B cell (primary cell): ENCODE measurements at regions of chr12 and their contacts with region 1.

Region 1: DNA sequence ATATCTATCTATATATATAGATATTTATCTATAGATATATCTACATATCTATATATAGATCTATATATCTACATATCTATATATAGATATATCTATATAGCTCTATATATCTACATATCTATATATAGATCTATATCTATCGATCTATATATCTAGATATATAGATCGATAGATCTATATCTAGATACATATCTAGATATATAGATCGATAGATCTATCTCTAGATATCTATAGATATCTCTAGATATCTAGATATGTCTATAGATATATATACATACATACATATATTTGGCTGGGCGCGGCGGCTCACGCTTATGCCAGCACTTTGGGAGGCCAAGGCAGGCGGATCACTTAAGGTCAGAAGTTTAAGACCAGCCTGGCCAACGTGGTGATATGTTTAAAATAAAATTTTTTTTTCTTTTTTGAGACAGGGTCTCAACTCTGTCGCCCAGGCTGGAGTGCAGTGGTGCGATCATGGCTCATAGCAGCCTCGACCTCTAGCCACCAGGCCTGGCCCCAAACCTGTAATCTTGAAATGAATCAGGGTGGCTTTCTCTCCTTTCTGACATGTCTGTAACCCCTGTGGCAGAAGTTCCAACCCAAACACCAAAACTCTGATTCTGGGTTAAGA is 18.1 kb downstream of the ARPC3 start:
- DNase-seq: no peak
- ATAC-seq: no peak
- H3K4me3 ChIP-seq: peak overlapping the region in 3 of 5 experiments; percentile 37 to 54 (median 51)
- H3K4me3 Mint-ChIP-seq: no peak overlapping the region
- H3K27ac ChIP-seq: peak overlapping the region; percentile 5 to 21
- H3K27ac Mint-ChIP-seq: no peak overlapping the region
- H3K4me1 ChIP-seq: peaks cover 0 to 5% of the 10 kb centered on the region in 2 donors
- H3K4me1 Mint-ChIP-seq: peaks cover 2% of the 10 kb centered on the region
- H3K27me3 ChIP-seq: no peaks in the 10 kb centered on the region
- H3K27me3 Mint-ChIP-seq: no peaks in the 10 kb centered on the region
- CTCF ChIP-seq: no peak

Region 2: DNA sequence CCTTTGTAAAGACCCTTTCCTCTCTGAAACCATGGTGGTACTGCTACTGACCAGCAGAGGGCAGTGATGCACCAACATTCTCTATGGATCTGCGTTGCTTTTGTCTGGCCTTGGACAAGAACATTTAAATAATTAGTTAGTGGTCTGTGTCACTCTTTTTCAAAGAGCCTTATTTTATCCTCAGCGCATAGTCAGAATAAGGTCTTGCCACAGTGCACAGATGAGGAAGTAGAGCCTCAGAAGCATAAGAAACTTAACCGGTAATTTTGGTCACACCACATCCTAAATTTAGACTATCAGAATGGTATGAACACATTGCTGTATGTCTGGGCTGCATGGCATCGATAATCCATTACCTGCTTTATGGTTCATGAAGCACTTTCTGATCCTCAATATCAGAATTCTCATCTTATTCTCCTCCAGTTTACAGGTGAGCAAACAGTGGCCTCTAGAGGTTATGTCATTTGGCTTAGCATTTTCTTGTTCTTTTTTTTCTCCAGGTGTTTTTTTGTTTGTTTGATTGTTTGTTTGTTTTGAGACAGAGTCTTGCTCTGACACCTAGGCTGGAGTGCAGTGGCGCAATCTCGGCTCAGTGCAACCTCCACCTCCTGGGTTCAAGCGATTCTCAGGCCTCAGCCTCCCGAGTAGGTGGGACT is 331.6 kb before region 1 on chr12:
- CTCF ChIA-PET with region 1: interaction called, 39 read pairs
- POLR2A ChIA-PET with region 1: no interaction called
- intact Hi-C with region 1: loop called (anchors 1 kb)
- DNase-seq: peak; percentile 91
- ATAC-seq: peak; percentile 98
- H3K4me3 ChIP-seq: peak overlapping the region in 2 of 5 experiments; percentile 15 to 21
- H3K4me3 Mint-ChIP-seq: peak overlapping the region; percentile 67
- H3K27ac ChIP-seq: peak overlapping the region; percentile 72 to 73
- H3K27ac Mint-ChIP-seq: peak overlapping the region; percentile 81
- H3K4me1 ChIP-seq: peaks cover 21 to 22% of the 10 kb centered on the region in 2 donors
- H3K4me1 Mint-ChIP-seq: peaks cover 24% of the 10 kb centered on the region
- H3K27me3 ChIP-seq: no peaks in the 10 kb centered on the region
- H3K27me3 Mint-ChIP-seq: no peaks in the 10 kb centered on the region
- CTCF ChIP-seq: peak; percentile 93

Region 3: GRCh38 chr12:110330544-110330943 is 101.5 kb before region 1 on chr12:
- CTCF ChIA-PET with region 1: interaction called, 13 read pairs
- POLR2A ChIA-PET with region 1: interaction called, 8 read pairs
- intact Hi-C with region 1: no loop called
- DNase-seq: no peak
- ATAC-seq: no peak
- H3K4me3 ChIP-seq: no peak overlapping the region
- H3K4me3 Mint-ChIP-seq: no peak overlapping the region
- H3K27ac ChIP-seq: no peak overlapping the region
- H3K27ac Mint-ChIP-seq: no peak overlapping the region
- H3K4me1 ChIP-seq: no peaks in the 10 kb centered on the region
- H3K4me1 Mint-ChIP-seq: no peaks in the 10 kb centered on the region
- H3K27me3 ChIP-seq: no peaks in the 10 kb centered on the region
- H3K27me3 Mint-ChIP-seq: no peaks in the 10 kb centered on the region
- CTCF ChIP-seq: no peak

Region 4: DNA sequence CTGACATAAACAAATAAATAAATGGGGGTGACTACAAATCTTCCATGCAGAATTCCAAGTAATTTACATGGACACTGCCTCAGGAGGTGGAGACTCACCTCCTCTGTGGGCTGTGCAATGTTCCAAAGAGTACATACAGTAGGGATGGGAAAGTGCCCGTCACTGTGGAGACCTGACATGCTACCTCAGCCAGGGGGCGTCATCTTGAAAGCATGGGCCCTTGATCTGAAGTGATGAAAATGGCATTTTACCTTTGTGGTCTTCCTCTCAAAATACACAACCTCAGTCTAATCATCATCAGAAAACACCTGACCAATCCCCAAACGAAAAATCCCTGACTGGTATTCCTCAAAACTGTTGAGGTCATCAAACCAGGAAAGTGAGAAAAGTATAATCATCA is 77.0 kb before region 1 on chr12:
- CTCF ChIA-PET with region 1: interaction called, 30 read pairs
- POLR2A ChIA-PET with region 1: interaction called, 4 read pairs
- intact Hi-C with region 1: loop called (anchors 1 kb)
- DNase-seq: peak; percentile 55
- ATAC-seq: peak; percentile 62
- H3K4me3 ChIP-seq: no peak overlapping the region
- H3K4me3 Mint-ChIP-seq: no peak overlapping the region
- H3K27ac ChIP-seq: no peak overlapping the region
- H3K27ac Mint-ChIP-seq: no peak overlapping the region
- H3K4me1 ChIP-seq: peaks cover 2 to 6% of the 10 kb centered on the region in 2 donors
- H3K4me1 Mint-ChIP-seq: peaks cover 15% of the 10 kb centered on the region
- H3K27me3 ChIP-seq: peaks cover 0 to 3% (median 0%) of the 10 kb centered on the region in 4 experiments
- H3K27me3 Mint-ChIP-seq: no peaks in the 10 kb centered on the region
- CTCF ChIP-seq: peak; percentile 61

Region 5: DNA sequence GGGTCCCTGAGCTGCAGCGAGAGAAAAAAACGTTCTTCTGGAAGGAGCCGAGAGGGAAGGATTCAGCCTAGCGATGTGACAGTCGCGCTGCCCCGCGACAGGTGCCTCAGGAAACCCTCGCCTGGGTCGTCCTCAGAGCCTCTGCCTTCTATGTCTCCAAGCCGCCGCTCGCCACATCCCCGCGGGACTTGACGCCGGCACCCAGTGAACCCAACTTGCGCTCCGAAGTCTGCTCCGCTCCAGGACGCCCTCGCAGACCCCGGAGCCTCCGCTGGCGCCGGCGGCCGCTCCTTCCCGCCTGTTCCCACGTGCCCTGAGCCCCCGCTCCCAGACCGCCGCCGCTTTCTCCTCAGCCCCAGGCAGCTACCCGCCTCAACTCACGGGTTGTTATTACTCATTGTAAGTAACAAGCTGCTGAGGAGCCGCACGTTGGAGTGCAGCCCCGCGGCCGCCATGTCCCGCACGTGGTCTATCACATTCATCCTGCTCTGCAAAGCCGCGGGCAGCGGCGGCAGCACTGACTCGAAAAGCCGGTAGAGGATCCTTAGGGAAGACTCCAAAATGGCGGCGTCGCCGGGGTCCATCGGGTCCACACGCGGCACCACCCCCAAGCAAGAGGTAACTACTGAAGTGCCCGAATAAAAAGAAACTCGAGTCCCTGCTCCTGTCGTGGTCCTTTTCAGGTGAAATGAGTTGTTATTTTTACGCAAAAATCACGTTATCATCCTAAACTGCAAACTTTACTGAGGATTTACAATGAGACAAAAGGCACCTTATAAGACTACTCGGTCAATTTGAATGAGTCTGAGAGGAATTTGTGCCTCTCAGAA is 28.7 kb before region 1 on chr12 and contains the start of gene ANAPC7:
- CTCF ChIA-PET with region 1: interaction called, 12 read pairs
- POLR2A ChIA-PET with region 1: no interaction called
- intact Hi-C with region 1: loop called (anchors 1 kb)
- DNase-seq: peak; percentile 92
- ATAC-seq: peak; percentile 93
- H3K4me3 ChIP-seq: peak within 1 kb of the TSS; percentile 85 to 100 (median 98)
- H3K4me3 Mint-ChIP-seq: peak within 1 kb of the TSS; percentile 99
- H3K27ac ChIP-seq: peak within 1 kb of the TSS; percentile 83 to 89
- H3K27ac Mint-ChIP-seq: peak within 1 kb of the TSS; percentile 99
- H3K4me1 ChIP-seq: peaks cover 13 to 18% of the 10 kb centered on the region in 2 donors
- H3K4me1 Mint-ChIP-seq: peaks cover 34% of the 10 kb centered on the region
- H3K27me3 ChIP-seq: no peaks in the 10 kb centered on the region
- H3K27me3 Mint-ChIP-seq: peaks cover 1% of the 10 kb centered on the region
- CTCF ChIP-seq: no peak
- total RNA-seq, gene ANAPC7: 68.4 and 68.8 TPM in 2 replicates

Region 6: DNA sequence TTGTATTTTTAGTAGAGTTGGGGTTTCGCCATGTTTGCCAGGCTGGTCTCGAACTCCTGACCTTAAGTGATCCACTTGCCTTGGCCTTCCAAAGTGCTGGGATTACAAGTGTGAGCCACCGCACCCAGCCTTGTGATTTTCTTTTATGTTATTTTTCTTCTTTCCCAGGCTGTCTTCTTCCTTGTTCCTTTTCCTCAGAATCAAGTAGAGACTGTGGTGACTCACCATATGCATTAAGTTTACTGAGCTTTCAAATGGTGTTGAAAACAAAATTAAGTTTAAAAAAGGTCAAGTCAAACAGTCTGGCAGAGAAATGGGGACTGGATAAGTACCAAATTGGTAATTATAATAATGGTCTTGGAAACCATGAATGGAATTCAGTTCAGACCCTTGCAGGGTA is 12.4 kb after region 1 on chr12:
- CTCF ChIA-PET with region 1: interaction called, 30 read pairs
- POLR2A ChIA-PET with region 1: interaction called, 11 read pairs
- intact Hi-C with region 1: no loop called
- DNase-seq: no peak
- ATAC-seq: no peak
- H3K4me3 ChIP-seq: no peak overlapping the region
- H3K4me3 Mint-ChIP-seq: no peak overlapping the region
- H3K27ac ChIP-seq: no peak overlapping the region
- H3K27ac Mint-ChIP-seq: no peak overlapping the region
- H3K4me1 ChIP-seq: peaks cover 34 to 40% of the 10 kb centered on the region in 2 donors
- H3K4me1 Mint-ChIP-seq: peaks cover 37% of the 10 kb centered on the region
- H3K27me3 ChIP-seq: no peaks in the 10 kb centered on the region
- H3K27me3 Mint-ChIP-seq: no peaks in the 10 kb centered on the region
- CTCF ChIP-seq: no peak

Region 7: DNA sequence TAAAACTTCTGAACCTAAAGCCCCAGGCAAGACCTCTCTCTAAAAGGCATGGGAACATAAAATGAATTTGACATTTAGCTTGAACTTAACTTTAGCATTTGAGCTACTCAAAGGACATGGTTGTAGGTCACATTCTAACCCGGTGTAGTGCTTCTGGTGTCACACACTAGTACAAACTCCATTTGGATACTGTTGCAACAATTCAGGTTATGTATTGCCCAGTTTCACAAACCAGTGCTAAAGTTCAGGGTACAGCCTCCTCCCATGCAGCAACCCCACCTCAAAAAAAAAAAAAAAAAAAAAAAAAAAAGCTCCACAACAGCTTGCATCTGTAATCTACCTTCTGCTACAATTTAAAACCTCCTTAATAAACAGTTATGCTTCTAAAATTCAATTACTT is 143.3 kb after region 1 on chr12:
- CTCF ChIA-PET with region 1: no interaction called
- POLR2A ChIA-PET with region 1: no interaction called
- intact Hi-C with region 1: no loop called
- DNase-seq: no peak
- ATAC-seq: no peak
- H3K4me3 ChIP-seq: no peak overlapping the region
- H3K4me3 Mint-ChIP-seq: peak overlapping the region; percentile 45
- H3K27ac ChIP-seq: peak overlapping the region in 1 of 2 donors; percentile 46
- H3K27ac Mint-ChIP-seq: peak overlapping the region; percentile 50
- H3K4me1 ChIP-seq: peaks cover 33 to 41% of the 10 kb centered on the region in 2 donors
- H3K4me1 Mint-ChIP-seq: peaks cover 53% of the 10 kb centered on the region
- H3K27me3 ChIP-seq: no peaks in the 10 kb centered on the region
- H3K27me3 Mint-ChIP-seq: no peaks in the 10 kb centered on the region
- CTCF ChIP-seq: no peak